ENCODE measurements at regions of chr12 and their contacts with region 1.

Region 1: DNA sequence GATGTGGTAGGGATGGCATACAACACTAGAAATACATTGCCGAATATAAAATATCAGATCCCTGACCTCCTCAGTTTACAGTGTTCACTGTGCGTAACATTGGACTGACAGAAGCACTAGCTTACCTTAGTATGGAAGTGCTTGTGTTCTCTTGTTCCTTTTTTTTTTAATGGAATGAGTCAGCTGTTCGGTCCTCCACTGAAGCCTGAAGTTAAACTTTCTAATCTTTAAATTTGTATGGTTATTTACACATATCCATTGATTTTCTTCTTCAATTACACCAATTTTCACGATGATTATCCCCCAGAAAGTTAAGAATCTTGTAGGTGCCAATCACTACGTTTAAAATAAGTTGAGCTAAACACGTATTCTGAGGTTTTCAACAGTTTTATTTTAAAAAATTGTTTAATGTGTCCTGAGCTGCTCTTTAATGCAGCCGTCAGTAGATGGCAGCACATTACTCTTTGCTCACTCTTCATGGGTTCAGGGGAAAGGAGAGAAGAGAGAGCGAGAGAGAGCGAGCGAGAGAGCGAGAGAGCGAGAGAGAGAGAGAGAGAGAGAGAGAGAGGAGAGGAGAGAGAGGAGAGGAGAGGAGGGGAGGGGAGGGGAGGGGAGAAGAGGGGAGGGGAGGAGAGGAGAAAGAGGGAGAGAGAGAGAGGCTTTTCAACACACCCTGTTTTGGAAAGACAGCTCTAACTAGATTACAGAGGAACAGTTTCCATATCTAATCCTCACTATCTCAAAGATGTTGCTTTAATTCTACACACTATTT is 134.7 kb upstream of the SCAF11 start:
- DNase-seq: peak; percentile 34
- H3K4me3 ChIP-seq: peak overlapping the region; percentile 22
- H3K27me3 ChIP-seq: peaks cover 6% of the 10 kb centered on the region; the same call in 1 of the 2 replicates
- CTCF ChIP-seq: peak; percentile 73

Region 2: GRCh38 chr12:45948546-45948945 is 176.5 kb before region 1 on chr12:
- CTCF ChIA-PET with region 1: no interaction called
- POLR2A ChIA-PET with region 1: no interaction called
- DNase-seq: no peak
- H3K4me3 ChIP-seq: no peak overlapping the region
- H3K27me3 ChIP-seq: no peaks in the 10 kb centered on the region
- CTCF ChIP-seq: no peak

Region 3: DNA sequence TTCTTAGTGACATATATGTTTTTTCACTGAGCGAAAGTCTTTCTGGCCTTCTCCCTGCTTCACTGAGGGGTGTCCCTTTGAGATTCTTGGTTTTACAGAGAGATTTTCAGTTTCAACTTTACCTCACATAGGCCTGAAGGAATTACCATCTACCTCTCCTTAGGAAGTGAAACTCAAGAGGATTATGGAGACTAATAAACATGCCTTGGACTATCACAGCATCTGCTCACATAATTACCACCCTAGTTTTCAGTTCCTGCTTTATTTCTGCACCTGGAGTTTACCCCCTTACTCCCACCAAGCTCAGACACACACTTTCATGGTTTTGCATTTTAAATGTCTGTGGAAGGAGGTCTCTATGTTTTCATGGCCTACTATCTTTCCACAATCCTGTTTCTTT is 16.3 kb before region 1 on chr12:
- CTCF ChIA-PET with region 1: interaction called, 14 read pairs
- POLR2A ChIA-PET with region 1: no interaction called
- DNase-seq: no peak
- H3K4me3 ChIP-seq: no peak overlapping the region
- H3K27me3 ChIP-seq: peaks cover 4% of the 10 kb centered on the region; the same call in 1 of the 2 replicates
- CTCF ChIP-seq: no peak

Region 4: DNA sequence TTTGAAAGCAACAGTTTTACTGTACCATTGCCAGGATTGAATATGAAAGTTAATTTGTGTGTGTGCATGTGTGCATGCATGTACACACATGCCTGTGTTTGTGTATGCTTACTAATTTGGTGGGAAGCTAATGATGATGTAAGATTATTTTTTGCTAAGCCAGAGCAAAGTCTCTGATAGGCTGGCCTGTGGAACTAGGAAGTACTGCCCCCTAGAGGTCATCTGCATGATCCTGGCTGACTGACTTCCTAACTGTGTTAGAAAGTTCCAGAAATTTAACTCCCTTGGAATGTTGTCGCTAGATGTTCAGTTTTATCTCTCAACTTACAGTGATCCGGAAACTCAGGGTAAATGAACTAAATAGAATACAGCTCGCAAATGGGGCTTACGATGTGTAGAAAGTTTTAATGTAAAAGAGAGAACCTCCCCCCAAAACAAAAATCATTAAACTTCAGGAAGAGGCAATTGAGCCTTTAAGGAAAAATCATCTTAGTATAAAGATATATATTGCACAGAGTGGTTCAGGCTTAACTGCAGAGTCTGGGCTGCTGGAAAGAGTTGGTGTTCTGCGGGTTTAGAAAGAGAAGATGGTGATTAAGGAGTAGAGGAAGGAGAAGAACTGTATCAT is 178.1 kb after region 1 on chr12:
- CTCF ChIA-PET with region 1: interaction called, 15 read pairs
- POLR2A ChIA-PET with region 1: no interaction called
- DNase-seq: no peak
- H3K4me3 ChIP-seq: no peak overlapping the region
- H3K27me3 ChIP-seq: peaks cover 2% of the 10 kb centered on the region
- CTCF ChIP-seq: peak; percentile 54

Region 5: DNA sequence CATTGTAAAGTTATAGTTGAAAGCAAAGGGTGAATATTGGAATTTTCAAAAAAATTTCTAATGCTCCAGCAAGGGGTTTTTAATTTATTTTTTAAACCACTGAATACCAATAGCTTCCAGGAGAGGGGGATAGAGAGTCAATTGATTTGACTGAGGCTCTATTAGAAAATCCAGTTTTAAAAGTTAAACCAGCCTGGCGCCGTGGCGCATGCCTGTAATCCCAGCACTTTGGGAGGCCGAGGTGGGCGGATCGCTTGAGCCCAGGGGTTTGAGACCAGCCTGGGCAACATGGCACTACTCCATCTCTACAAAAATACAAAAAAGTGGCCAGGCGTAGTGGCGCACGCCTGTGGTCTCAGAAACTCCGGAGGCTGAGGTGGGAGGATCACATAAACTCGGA is 550.7 kb after region 1 on chr12:
- CTCF ChIA-PET with region 1: interaction called, 11 read pairs
- POLR2A ChIA-PET with region 1: no interaction called
- DNase-seq: no peak
- H3K4me3 ChIP-seq: no peak overlapping the region
- H3K27me3 ChIP-seq: no peaks in the 10 kb centered on the region
- CTCF ChIP-seq: peak; percentile 53

Region 6: DNA sequence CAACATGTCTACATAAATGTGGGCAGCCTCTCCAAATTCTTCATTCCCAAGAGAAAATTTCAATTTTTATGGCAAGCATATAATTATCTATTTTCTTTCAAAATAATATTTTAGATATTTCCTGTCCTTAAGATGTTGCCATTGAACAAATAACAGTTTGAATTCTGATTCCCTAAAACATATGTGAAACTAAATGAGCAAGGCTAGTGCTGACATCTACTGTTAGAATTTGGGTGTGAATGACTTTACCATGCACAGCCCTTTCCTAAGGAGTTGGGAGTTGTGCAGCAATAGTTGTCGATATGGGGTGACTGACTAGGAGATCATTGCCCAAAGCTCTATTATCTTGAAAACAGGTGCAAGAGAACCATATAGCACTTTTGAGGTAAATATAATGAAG is 808.9 kb after region 1 on chr12:
- CTCF ChIA-PET with region 1: interaction called, 13 read pairs
- POLR2A ChIA-PET with region 1: no interaction called
- DNase-seq: no peak
- H3K4me3 ChIP-seq: no peak overlapping the region
- H3K27me3 ChIP-seq: no peaks in the 10 kb centered on the region
- CTCF ChIP-seq: peak; percentile 62

Region 7: DNA sequence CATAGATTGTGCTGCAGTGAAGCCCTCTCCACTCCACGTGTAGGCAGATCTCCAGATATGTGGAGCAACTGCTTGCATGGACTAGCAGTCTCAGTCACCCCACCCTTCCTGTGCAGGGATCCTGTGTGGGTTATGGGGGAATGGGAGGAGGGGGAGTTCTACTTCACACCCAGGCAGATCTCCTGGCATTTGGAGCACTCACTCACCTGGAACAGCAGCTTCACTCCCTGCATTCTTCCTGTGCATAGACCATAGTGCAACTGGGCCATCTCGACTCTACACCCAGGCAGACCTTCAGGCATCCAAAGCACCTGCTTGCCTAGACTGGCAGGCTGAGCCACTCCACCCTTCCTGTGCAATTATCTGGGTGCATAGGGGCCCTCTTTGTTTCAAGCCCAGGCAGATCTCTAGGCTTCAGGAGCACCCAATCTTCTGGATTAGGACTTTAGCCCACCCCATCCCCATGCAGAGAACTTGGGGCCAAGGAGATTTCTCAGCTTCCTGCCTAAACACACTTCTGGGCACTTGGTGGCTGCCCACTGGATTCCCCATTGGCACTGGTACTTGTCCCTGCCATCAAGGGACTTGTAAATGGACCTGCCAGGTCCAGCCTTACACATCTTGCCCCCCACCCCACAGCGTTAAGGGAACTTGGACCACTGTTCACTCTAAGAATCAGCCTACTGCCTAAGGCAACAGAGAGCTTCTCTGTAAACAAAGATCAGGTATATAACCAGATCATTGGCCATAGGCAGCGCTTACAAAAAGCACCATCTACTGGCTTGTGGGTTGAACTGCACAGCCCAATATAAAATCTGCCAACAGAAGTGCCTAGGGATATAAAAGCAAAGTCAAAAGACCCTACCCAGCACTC is 858.6 kb after region 1 on chr12:
- CTCF ChIA-PET with region 1: interaction called, 13 read pairs
- POLR2A ChIA-PET with region 1: no interaction called
- DNase-seq: no peak
- H3K4me3 ChIP-seq: no peak overlapping the region
- H3K27me3 ChIP-seq: no peaks in the 10 kb centered on the region
- CTCF ChIP-seq: peak; percentile 89

Region 8: GRCh38 chr12:47021298-47021697 is 896.3 kb after region 1 on chr12:
- CTCF ChIA-PET with region 1: interaction called, 20 read pairs
- POLR2A ChIA-PET with region 1: no interaction called
- DNase-seq: peak; percentile 62
- H3K4me3 ChIP-seq: no peak overlapping the region
- H3K27me3 ChIP-seq: no peaks in the 10 kb centered on the region
- CTCF ChIP-seq: peak; percentile 54